HEK293 (cell line): ENCODE measurements at regions of chr21 and their contacts with region 1.

Region 1: GRCh38 chr21:39083377-39084008 is 99.8 kb downstream of the PSMG1 start:
- H3K4me3 ChIP-seq: no peak overlapping the region
- H3K27ac ChIP-seq: no peak overlapping the region
- H3K4me1 ChIP-seq: no peaks in the 10 kb centered on the region
- CTCF ChIP-seq: no peak

Region 2: GRCh38 chr21:39094847-39095579 is 11.5 kb after region 1 on chr21:
- CTCF ChIA-PET with region 1: interaction called, 12 read pairs
- POLR2A ChIA-PET with region 1: interaction called, 3 read pairs
- H3K4me3 ChIP-seq: no peak overlapping the region
- H3K27ac ChIP-seq: no peak overlapping the region
- H3K4me1 ChIP-seq: no peaks in the 10 kb centered on the region
- CTCF ChIP-seq: no peak